Sigmoid colon (tissue), 7 donors: ENCODE measurements at regions of chr3 and their contacts with region 1.

Region 1: GRCh38 chr3:159804726-159805410 is 183.8 kb upstream of the IL12A start:
- DNase-seq: peak; percentile 90
- H3K4me3 ChIP-seq: no peak overlapping the region
- H3K27ac ChIP-seq: peak overlapping the region; percentile 77 to 90 (median 83)
- H3K4me1 ChIP-seq: peaks cover 0 to 85% (median 70%) of the 10 kb centered on the region in 4 donors
- H3K27me3 ChIP-seq: no peaks in the 10 kb centered on the region
- CTCF ChIP-seq: peak; percentile 77 to 87 (median 84)
- EP300 ChIP-seq: no peak
- POLR2A ChIP-seq: no peak

Region 2: DNA sequence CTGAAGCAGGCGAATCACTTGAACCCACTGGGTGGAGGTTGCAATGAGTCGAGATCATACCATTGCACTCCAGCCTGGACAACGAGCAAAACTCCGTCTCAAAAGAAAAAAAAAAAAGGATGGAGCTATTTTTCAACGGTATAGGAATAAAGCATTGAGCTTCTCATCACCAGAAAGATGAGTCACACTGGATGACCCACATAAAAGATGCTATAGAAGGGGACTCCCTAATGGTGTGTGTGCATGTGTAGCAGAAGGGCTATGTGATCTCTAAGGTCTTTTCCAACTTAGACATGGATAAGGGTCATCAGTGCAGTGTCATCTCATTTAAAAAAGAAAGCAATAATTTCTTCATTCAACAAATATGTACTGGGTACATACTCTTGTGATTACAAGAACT is 527.1 kb before region 1 on chr3:
- intact Hi-C with region 1: loop called (anchors 5 kb)
- DNase-seq: no peak
- H3K4me3 ChIP-seq: no peak overlapping the region
- H3K27ac ChIP-seq: no peak overlapping the region
- H3K4me1 ChIP-seq: no peaks in the 10 kb centered on the region
- H3K27me3 ChIP-seq: no peaks in the 10 kb centered on the region
- CTCF ChIP-seq: no peak
- EP300 ChIP-seq: no peak
- POLR2A ChIP-seq: no peak

Region 3: GRCh38 chr3:159645874-159646273 is 159.0 kb before region 1 on chr3:
- intact Hi-C with region 1: no loop called
- DNase-seq: no peak
- H3K4me3 ChIP-seq: no peak overlapping the region
- H3K27ac ChIP-seq: no peak overlapping the region
- H3K4me1 ChIP-seq: no peaks in the 10 kb centered on the region
- H3K27me3 ChIP-seq: no peaks in the 10 kb centered on the region
- CTCF ChIP-seq: no peak
- EP300 ChIP-seq: no peak
- POLR2A ChIP-seq: no peak

Region 4: DNA sequence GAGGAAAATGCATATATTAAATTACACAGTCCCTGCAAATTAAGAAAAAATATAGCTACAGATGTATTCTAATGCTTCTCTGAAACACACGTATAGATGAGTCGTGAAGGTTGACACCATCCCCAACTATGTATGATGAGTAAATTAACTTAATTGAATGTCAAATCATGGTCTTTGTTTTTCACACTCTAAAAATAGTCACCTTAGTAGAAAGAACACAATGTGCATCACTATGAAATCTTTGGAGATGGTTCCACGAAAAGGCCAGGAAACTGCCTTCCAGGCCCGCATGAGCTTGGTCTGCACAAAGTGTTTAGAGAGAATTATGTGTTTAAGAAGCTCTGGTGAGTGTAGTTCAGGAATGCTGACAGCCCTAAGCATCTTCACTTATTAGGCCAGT is 129.6 kb before region 1 on chr3:
- intact Hi-C with region 1: loop called (anchors 5 kb)
- DNase-seq: no peak
- H3K4me3 ChIP-seq: no peak overlapping the region
- H3K27ac ChIP-seq: peak overlapping the region in 2 of 4 donors; percentile 55 to 66
- H3K4me1 ChIP-seq: peaks cover 0 to 14% (median 9%) of the 10 kb centered on the region in 4 donors
- H3K27me3 ChIP-seq: no peaks in the 10 kb centered on the region
- CTCF ChIP-seq: no peak
- EP300 ChIP-seq: peak in 1 of 4 donors; percentile 56
- POLR2A ChIP-seq: no peak

Region 5: GRCh38 chr3:160006282-160007163 is 201.7 kb after region 1 on chr3:
- intact Hi-C with region 1: loop called (anchors 5 kb)
- DNase-seq: peak; percentile 69
- H3K4me3 ChIP-seq: no peak overlapping the region
- H3K27ac ChIP-seq: no peak overlapping the region
- H3K4me1 ChIP-seq: peaks cover 0 to 7% (median 2%) of the 10 kb centered on the region in 4 donors
- H3K27me3 ChIP-seq: no peaks in the 10 kb centered on the region
- CTCF ChIP-seq: peak; percentile 50 to 81 (median 78)
- EP300 ChIP-seq: no peak
- POLR2A ChIP-seq: no peak